MCF 10A (cell line): ENCODE measurements at regions of chr20 and their contacts with region 1.

Region 1: GRCh38 chr20:8853805-8854338 is 215.0 kb upstream of the PLCB4 start:
- DNase-seq: peak; percentile 79
- H3K4me3 Mint-ChIP-seq: no peak overlapping the region
- H3K27ac Mint-ChIP-seq: no peak overlapping the region
- H3K4me1 Mint-ChIP-seq: peaks cover 14% of the 10 kb centered on the region
- H3K27me3 Mint-ChIP-seq: no peaks in the 10 kb centered on the region
- CTCF ChIP-seq: peak; percentile 67

Region 2: DNA sequence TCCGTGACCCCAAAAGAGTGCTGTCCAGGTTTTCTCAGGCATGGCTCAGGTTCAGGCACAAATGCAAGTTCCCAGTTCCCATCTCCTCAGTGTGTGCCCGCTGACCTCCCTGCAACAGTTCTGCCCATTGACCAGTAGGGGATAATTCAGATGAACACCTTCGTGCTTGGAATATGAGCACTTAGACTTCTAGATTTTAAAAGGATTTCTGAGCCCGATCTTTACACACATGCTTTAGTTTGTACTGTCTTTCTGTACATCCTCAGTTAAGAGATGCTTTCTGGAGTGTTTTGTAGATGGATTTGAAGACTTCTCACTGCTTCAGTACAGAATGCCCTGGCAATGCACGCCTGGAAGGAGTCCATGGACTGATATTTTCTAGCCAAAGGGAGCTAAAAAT is 24.6 kb before region 1 on chr20:
- CTCF ChIA-PET with region 1: interaction called, 16 read pairs
- POLR2A ChIA-PET with region 1: no interaction called
- intact Hi-C with region 1: no loop called
- DNase-seq: peak; percentile 9
- H3K4me3 Mint-ChIP-seq: no peak overlapping the region
- H3K27ac Mint-ChIP-seq: no peak overlapping the region
- H3K4me1 Mint-ChIP-seq: no peaks in the 10 kb centered on the region
- H3K27me3 Mint-ChIP-seq: no peaks in the 10 kb centered on the region
- CTCF ChIP-seq: no peak

Region 3: DNA sequence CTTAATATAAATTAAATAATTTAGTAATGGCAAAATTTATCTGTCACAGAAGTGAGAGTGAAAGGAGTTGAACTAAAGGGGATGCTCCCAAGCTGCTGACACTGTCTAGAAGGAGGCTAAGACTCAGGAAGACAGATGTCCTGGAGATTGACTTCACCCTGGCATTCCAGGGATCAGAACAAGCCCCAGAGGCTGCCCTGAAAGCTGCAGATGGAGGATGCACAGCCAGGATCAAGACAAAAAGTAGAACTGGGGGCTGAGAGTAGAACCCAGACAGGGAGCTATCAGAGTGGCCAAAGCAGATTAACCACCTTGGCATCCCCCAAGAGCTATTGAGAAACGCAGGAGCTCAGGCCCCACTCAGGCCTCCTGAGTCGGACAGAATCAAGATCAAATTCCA is 25.8 kb after region 1 on chr20:
- CTCF ChIA-PET with region 1: interaction called, 12 read pairs
- POLR2A ChIA-PET with region 1: no interaction called
- intact Hi-C with region 1: no loop called
- DNase-seq: no peak
- H3K4me3 Mint-ChIP-seq: no peak overlapping the region
- H3K27ac Mint-ChIP-seq: no peak overlapping the region
- H3K4me1 Mint-ChIP-seq: no peaks in the 10 kb centered on the region
- H3K27me3 Mint-ChIP-seq: no peaks in the 10 kb centered on the region
- CTCF ChIP-seq: no peak

Region 4: DNA sequence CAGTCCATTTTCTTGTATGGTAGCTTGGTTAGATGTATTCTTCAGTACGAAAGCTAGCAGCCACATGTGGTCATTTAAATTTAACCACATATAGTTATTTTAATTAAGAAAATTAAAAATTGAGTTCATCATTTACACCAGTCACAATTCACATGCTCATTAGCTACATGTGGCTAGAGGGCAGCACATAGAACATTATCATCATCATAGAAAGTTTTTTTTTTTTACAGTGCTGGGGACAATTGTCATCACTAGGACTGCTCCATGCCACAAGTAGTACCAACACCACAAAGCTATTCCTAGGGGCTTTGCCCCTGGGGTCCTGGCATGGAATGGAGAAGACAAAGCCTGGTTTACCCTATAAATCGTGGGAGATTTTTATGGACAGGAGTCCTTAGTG is 245.5 kb after region 1 on chr20:
- CTCF ChIA-PET with region 1: interaction called, 10 read pairs
- POLR2A ChIA-PET with region 1: no interaction called
- intact Hi-C with region 1: no loop called
- DNase-seq: no peak
- H3K4me3 Mint-ChIP-seq: no peak overlapping the region
- H3K27ac Mint-ChIP-seq: no peak overlapping the region
- H3K4me1 Mint-ChIP-seq: no peaks in the 10 kb centered on the region
- H3K27me3 Mint-ChIP-seq: no peaks in the 10 kb centered on the region
- CTCF ChIP-seq: no peak

Region 5: DNA sequence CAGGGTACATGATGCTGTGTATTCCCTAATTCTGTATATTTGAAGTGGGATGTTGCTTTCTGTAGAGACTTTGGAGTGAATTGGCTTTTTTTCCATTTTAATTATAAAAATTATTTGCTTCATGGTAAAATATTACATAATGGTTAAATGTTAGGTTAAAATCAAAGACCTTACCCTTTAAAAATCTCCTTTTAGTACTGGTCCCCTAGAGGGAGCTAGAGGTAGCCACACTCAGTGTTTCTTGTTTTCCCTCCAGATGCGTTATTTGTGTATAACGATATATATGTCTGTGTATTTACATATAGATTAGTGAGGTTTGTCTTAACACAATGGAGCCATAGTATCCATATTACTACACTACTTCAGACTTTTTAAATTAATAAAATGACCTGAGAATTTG is 361.7 kb after region 1 on chr20:
- CTCF ChIA-PET with region 1: interaction called, 7 read pairs
- POLR2A ChIA-PET with region 1: no interaction called
- intact Hi-C with region 1: loop called (anchors 2 kb)
- DNase-seq: peak; percentile 42
- H3K4me3 Mint-ChIP-seq: no peak overlapping the region
- H3K27ac Mint-ChIP-seq: no peak overlapping the region
- H3K4me1 Mint-ChIP-seq: peaks cover 10% of the 10 kb centered on the region
- H3K27me3 Mint-ChIP-seq: no peaks in the 10 kb centered on the region
- CTCF ChIP-seq: peak; percentile 37

Region 6: DNA sequence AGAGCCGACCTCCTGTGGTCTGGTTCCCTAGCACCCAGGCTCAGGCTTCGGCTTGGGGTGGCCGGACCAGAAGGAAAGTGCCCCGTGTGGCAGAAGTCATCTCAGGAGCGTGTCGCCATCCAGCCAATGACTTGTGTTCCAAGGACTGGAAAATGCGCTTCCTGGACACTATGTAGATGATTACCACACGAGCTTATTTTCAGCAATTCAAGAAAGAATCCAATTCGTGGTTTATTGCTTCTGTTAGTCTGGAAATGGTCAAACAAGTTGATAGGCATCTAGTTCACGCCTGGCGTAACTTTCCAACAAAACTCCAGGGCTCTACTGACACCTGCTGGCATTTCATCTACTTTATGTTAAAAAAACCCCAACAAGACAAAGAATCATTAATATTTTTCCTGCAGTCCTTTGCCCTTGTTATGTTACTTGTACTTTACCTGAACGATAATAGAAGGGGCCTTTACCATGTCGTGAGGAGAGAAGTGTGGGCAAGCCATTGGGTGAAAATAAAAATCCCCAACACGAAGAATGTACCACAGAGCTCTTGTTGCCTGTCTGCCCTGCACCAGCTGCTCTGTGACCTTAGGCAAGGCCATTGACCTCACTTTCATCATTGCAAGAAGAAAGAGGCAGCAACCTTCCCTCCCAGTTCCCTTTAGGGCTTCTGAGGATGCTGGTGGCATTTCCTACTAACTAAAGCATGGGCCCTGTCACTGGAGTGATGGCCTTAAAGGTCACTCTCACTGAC is 505.9 kb after region 1 on chr20:
- CTCF ChIA-PET with region 1: interaction called, 85 read pairs
- POLR2A ChIA-PET with region 1: no interaction called
- intact Hi-C with region 1: loop called (anchors 1 kb)
- DNase-seq: peak; percentile 62
- H3K4me3 Mint-ChIP-seq: no peak overlapping the region
- H3K27ac Mint-ChIP-seq: no peak overlapping the region
- H3K4me1 Mint-ChIP-seq: no peaks in the 10 kb centered on the region
- H3K27me3 Mint-ChIP-seq: no peaks in the 10 kb centered on the region
- CTCF ChIP-seq: peak; percentile 51